Spleen (tissue), 13 donors: ENCODE measurements at regions of chr19 and their contacts with region 1.

Region 1: DNA sequence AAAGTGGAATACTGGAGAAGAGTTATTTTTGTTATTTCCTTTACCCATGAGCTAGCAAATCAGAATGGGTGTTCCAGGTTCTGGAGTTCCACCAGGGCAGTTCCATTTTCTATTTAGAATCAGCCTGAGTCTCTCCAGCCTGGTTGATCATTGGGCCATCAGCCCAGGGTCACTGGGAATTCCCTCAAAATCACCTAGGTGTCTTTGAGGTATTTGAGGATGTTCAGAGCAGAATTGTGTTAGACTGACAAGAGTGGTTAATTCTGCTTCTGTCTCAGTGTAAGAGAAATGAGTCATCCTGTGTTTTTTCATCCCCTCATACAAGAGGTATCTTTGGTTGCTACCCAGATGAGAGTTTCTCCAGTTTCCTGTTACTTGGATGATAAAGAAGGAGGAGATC is 11.7 kb downstream of the ZNF66 start:
- DNase-seq: no peak
- H3K4me3 ChIP-seq: no peak overlapping the region
- H3K27ac ChIP-seq: no peak overlapping the region
- H3K4me1 ChIP-seq: no peaks in the 10 kb centered on the region
- H3K27me3 ChIP-seq: no peaks in the 10 kb centered on the region
- CTCF ChIP-seq: no peak
- POLR2A ChIP-seq: no peak

Region 2: DNA sequence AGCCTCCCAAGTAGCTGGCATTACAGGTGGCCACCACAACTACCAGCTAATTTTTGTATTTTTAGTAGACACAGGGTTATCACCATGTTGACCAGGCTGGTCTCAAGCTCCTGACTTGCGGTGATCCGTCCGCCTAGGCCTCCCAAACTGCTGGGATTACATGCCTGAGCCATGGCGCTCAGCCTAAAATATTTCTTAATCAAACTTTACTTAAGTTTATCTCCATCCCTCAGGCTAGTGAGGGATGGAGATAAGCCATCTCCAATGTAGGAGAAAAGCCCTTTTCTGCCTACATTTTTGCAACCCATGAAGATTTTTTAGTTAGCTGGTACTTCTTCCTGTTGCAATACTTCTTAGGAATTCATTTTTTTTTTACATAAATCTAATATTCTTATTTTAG is 128.4 kb before region 1 on chr19:
- intact Hi-C with region 1: loop called (anchors 10 kb)
- DNase-seq: no peak
- H3K4me3 ChIP-seq: no peak overlapping the region
- H3K27ac ChIP-seq: no peak overlapping the region
- H3K4me1 ChIP-seq: peaks cover 8 to 51% (median 23%) of the 10 kb centered on the region in 6 donors
- H3K27me3 ChIP-seq: no peaks in the 10 kb centered on the region
- CTCF ChIP-seq: no peak
- POLR2A ChIP-seq: no peak